HepG2 (cell line): ENCODE measurements at regions of chr3 and their contacts with region 1.

Region 1: DNA sequence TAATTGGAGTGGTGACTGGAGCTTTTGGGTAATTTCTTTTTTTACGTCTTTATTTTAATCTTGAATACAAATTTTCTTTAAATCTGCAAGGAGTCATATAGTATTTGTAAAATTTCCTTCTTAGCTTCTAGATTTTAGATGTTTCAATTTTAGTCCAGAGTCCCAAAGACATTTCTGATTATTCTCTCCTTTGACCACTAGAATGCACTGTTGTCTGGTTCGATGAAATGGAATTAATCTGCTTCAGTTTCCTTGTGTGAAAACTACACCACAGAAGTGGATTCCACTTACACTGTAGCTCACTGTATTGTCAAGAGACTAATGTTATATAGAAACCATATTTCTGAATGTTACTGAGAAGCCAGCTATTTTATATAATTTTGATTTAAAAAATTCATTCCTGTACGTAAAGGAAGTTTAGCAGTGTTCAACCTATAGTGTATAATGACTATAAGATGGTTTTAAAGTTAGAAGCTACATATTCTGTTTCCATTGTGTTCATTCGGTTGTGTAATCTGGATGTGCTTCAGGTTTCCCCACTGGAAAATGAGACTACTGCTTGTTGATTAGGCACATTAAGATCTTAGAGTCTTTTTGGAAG is 6.1 kb downstream of the GRAMD1C start:
- DNase-seq: peak; percentile 39
- ATAC-seq: peak; percentile 46; the same call in 1 of the 3 replicates
- H3K4me3 ChIP-seq: no peak overlapping the region
- H3K27ac ChIP-seq: no peak overlapping the region
- H3K4me1 ChIP-seq: no peaks in the 10 kb centered on the region
- H3K27me3 ChIP-seq: no peaks in the 10 kb centered on the region
- CTCF ChIP-seq: peak; percentile 65
- EP300 ChIP-seq: no peak
- POLR2A ChIP-seq: no peak
- RAD21 ChIP-seq: no peak; the same call in 1 of the 2 replicates

Region 2: DNA sequence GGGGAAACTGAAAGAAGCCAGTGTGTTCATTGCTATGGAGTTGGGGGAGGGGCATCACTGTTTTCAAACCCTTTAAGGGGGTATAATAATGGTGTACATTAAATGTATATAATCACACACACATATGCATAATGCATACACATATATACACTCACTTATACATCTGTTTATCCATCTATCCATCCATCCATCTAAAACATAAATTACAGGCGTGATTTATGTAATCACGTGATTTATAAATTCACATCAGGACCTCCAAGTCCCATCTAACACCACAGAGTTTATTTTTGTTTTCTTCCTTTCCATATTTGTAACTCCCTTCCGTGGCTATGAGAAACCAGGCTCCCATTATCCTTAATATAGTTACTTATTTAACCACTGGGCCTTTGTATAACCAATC is 33.7 kb after region 1 on chr3:
- CTCF ChIA-PET with region 1: no interaction called
- POLR2A ChIA-PET with region 1: no interaction called
- in situ Hi-C with region 1: no loop called
- intact Hi-C with region 1: loop called (anchors 5 kb)
- DNase-seq: no peak
- ATAC-seq: no peak
- H3K4me3 ChIP-seq: no peak overlapping the region
- H3K27ac ChIP-seq: no peak overlapping the region
- H3K4me1 ChIP-seq: peaks cover 18% of the 10 kb centered on the region
- H3K27me3 ChIP-seq: no peaks in the 10 kb centered on the region; a peak in 1 of 5 replicates
- CTCF ChIP-seq: no peak
- EP300 ChIP-seq: no peak
- POLR2A ChIP-seq: no peak
- RAD21 ChIP-seq: no peak

Region 3: GRCh38 chr3:113912552-113913236 is 68.0 kb after region 1 on chr3:
- CTCF ChIA-PET with region 1: interaction called, 32 read pairs
- POLR2A ChIA-PET with region 1: no interaction called
- in situ Hi-C with region 1: loop called (anchors 5 kb)
- intact Hi-C with region 1: loop called (anchors 1 kb)
- DNase-seq: peak; percentile 69
- ATAC-seq: peak; percentile 96
- H3K4me3 ChIP-seq: no peak overlapping the region
- H3K27ac ChIP-seq: no peak overlapping the region
- H3K4me1 ChIP-seq: no peaks in the 10 kb centered on the region
- H3K27me3 ChIP-seq: 0 out of 5 replicates have a peak, but pooled peaks cover 0 to 8% of the 10 kb centered on the region in 2 experiments
- CTCF ChIP-seq: peak; percentile 85
- EP300 ChIP-seq: no peak
- POLR2A ChIP-seq: no peak
- RAD21 ChIP-seq: peak; percentile 76